Heart right ventricle (tissue), 16 donors: ENCODE measurements at regions of chr12 and their contacts with region 1.

Region 1: DNA sequence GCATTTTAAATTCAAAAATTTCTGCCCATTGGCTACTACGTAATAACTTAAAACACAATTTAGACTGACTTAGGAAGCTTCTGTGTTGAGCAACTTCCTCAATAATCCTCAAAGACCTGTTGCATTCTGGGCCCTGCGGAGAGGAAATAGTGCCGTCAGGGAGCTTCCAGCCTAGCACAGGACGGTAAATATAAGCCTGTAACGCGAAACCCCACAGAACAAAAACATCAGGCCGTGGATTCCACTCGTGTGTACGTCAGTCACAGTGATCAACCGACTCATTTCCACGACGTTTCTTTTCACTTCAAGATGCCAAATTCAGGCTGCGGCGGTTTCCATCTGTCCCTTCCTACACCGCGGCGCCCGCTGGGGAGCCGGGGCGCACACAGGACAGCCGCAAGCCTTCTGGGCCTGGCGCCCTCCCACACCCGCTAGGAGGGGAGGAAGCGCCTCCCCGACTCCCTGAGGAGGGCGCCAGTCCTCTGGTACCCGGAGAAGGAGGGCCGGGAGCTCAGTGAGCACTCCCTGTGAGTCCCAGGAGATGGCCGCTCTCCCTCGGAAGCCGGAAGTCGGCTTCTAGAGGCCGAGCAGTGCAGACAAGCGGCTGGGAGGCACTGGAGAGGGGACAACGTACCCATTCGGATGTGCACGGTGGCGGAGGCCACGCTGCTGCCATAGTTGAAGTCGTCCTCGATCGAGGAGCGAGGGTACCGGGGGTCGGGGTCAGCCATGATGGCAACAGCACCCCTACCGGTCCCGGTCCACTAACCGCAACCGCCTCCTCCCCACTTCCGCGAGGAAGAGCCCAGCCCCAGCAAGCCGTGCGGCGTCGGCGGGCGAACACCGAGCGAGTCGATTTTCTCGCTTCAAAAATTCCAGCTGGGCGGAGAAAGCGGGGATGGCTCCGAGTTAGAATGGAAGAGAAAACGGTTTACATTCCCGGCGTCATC is at the start of gene TMBIM4:
- DNase-seq: peak; percentile 89 to 91
- ATAC-seq: peak; percentile 95 to 99 (median 98)
- H3K4me3 ChIP-seq: peak within 1 kb of the TSS; percentile 51 to 90 (median 78)
- H3K27ac ChIP-seq: peak within 1 kb of the TSS; percentile 91 to 100 (median 98)
- H3K4me1 ChIP-seq: peaks cover 3 to 47% (median 22%) of the 10 kb centered on the region in 9 donors
- H3K27me3 ChIP-seq: no peaks in the 10 kb centered on the region
- CTCF ChIP-seq: peak; percentile 53 to 85 (median 62)
- total RNA-seq, gene TMBIM4: 54.8 to 79.3 (median 66.0) TPM

Region 2: DNA sequence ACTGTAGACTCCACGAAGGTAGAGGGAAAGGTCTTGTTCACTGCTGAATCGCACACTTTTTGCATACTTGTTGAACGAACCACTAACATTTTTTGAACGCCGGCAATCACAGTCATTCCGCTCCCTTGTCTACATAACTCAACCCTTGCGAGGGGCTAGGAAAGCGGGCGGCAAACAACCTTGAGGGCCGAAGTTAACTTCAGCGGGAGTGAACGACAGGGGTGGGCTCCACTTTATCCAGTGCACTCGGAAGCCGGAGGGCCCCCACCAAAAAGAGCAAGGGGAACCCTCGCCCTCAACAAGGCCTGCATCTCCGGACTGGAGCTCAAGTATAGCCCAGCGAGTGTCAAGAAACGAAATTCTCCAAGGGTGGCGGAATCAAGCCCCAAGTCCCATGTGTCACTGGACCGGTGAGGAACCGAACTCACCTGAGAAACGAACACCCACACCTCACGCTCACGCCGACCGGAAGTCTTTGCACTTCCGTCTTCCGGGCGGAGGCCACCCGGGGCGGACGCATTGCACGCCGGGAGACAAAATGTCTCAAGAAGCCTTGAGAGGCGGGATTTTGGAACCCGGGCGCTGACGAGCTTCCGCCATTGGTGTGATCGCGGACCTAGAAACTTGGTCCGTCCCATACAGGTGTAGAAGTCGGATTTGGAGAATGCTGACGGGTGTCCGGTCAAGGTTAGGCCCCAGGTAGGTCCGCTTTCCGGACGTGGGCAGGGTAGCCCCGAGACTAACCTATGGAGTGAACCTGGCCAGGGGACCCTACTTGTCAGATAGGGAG is 39.0 kb before region 1 on chr12 and contains the start of gene LLPH:
- intact Hi-C with region 1: loop called in 2 of 10 experiments (anchors 1 to 2 kb)
- DNase-seq: peak; percentile 85 to 89
- ATAC-seq: peak; percentile 92 to 97 (median 96)
- H3K4me3 ChIP-seq: peak within 1 kb of the TSS; percentile 51 to 95 (median 86)
- H3K27ac ChIP-seq: peak within 1 kb of the TSS in 9 of 10 donors; percentile 27 to 91 (median 83)
- H3K4me1 ChIP-seq: peaks cover 0 to 51% (median 29%) of the 10 kb centered on the region in 9 donors
- H3K27me3 ChIP-seq: no peaks in the 10 kb centered on the region
- CTCF ChIP-seq: no peak
- total RNA-seq, gene LLPH: 16.1 to 23.2 (median 18.9) TPM

Region 3: GRCh38 chr12:66144791-66145754 is 24.4 kb before region 1 on chr12:
- intact Hi-C with region 1: loop called in 1 of 10 experiments (anchors 2 kb)
- DNase-seq: peak in 1 of 2 donors; percentile 58
- ATAC-seq: peak; percentile 72 to 89 (median 84)
- H3K4me3 ChIP-seq: peak overlapping the region in 1 of 10 donors; percentile 13
- H3K27ac ChIP-seq: peak overlapping the region in 8 of 10 donors; percentile 38 to 83 (median 72)
- H3K4me1 ChIP-seq: peaks cover 0 to 50% (median 26%) of the 10 kb centered on the region in 9 donors
- H3K27me3 ChIP-seq: no peaks in the 10 kb centered on the region
- CTCF ChIP-seq: peak in 8 of 9 donors; percentile 42 to 78 (median 71)

Region 4: GRCh38 chr12:66188584-66189485 is 19.3 kb after region 1 on chr12 and contains the start of gene IRAK3:
- intact Hi-C with region 1: loop called in 3 of 10 experiments (anchors 1 to 2 kb)
- DNase-seq: peak; percentile 83 to 89
- ATAC-seq: peak; percentile 92 to 99 (median 97)
- H3K4me3 ChIP-seq: peak within 1 kb of the TSS; percentile 22 to 73 (median 62)
- H3K27ac ChIP-seq: peak within 1 kb of the TSS; percentile 80 to 99 (median 92)
- H3K4me1 ChIP-seq: peaks cover 0 to 48% (median 18%) of the 10 kb centered on the region in 9 donors
- H3K27me3 ChIP-seq: peaks cover 0 to 8% (median 3%) of the 10 kb centered on the region in 7 donors
- CTCF ChIP-seq: no peak
- total RNA-seq, gene IRAK3: 2.8 to 9.3 (median 4.3) TPM

Region 5: DNA sequence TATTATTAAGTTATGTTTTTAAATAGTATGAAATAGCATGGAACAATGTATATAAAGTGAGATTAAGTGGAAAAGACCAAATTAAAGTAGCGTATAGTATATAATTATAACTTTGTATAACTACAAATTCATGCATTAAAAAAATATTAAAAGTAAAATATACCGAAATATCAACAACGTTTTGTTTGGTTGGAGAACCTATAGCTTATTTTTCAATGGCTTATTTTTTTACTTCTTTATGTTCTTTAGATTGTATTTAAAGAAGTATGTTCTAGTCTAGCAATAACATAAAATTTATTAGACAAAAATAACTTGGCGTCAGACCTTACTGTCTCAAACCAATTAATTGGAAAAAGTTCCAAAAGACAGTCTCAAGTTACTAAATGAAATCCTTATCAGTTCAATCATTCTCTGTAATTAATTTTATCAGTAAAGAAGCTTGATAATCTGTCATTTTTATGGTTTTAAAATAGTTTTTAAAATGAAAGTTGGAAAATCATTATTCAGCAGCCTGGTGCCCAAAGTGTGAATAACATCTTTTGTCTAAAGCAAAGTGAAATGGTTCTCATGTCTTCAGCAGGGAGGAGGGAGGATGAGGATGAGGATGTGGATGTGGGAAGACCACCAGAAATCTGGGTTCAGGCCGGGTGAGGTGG is 66.3 kb after region 1 on chr12:
- intact Hi-C with region 1: loop called in 4 of 10 experiments (anchors 2 to 10 kb)
- DNase-seq: no peak
- ATAC-seq: no peak
- H3K4me3 ChIP-seq: peak overlapping the region in 9 of 10 donors; percentile 40 to 67 (median 61)
- H3K27ac ChIP-seq: peak overlapping the region in 7 of 10 donors; percentile 12 to 87 (median 49)
- H3K4me1 ChIP-seq: peaks cover 0 to 67% (median 7%) of the 10 kb centered on the region in 9 donors
- H3K27me3 ChIP-seq: no peaks in the 10 kb centered on the region
- CTCF ChIP-seq: no peak

Region 6: DNA sequence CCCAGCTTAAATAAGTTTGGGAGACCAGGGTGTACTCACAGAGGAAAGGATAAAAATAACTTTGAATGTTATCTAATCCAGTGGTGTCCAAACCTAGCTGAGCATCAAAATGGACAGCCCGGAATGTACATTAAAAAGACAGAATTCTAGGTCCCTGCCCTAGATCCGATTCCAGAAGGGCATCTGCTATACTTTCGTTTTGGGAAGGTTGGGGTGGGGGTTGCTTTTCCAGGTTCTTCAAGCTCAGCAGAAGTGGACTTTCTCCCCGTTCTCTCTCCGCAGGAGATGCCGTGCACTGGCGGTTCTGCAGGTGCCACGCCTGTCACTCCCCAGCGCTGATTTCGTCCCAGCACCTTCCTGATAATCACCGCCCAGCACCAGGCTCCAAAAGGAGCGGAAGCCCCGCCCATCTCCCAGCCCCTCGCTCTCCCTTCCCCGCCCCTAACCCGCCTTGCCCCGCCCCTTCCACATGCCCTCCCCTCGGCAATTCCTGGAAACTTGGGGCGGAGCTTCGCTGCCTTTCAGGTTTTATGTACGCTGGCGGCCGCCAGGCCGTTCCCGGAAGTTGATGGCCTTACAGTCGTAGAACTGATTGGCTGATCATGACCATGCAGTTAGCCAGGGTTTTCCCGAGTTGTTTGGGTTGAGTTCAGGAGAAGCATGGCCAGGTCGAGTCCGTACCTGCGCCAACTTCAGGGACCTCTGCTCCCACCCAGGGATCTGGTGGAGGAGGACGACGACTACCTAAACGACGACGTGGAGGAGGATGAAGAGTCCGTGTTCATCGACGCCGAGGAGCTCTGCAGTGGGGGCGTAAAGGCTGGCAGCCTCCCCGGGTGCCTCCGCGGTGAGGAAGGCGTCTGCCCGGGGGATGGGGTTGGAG is 132.7 kb after region 1 on chr12 and contains the start of gene HELB:
- intact Hi-C with region 1: loop called in 3 of 10 experiments (anchors 1 to 10 kb)
- DNase-seq: peak; percentile 98
- ATAC-seq: peak; percentile 98 to 100 (median 100)
- H3K4me3 ChIP-seq: peak within 1 kb of the TSS; percentile 46 to 79 (median 70)
- H3K27ac ChIP-seq: peak within 1 kb of the TSS in 9 of 10 donors; percentile 43 to 91 (median 85)
- H3K4me1 ChIP-seq: peaks cover 0 to 40% (median 14%) of the 10 kb centered on the region in 9 donors
- H3K27me3 ChIP-seq: peaks cover 0 to 7% (median 0%) of the 10 kb centered on the region in 7 donors
- CTCF ChIP-seq: no peak
- total RNA-seq, gene HELB: 0.47 to 3.6 (median 1.2) TPM